ENCODE measurements at regions of chr19 and their contacts with region 1.

Region 1: GRCh38 chr19:18636183-18636968 is 452 bp upstream of the KLHL26 start:
- DNase-seq: peak; percentile 97
- H3K4me3 ChIP-seq: peak overlapping the region; percentile 77 to 94 (median 93)
- H3K27ac ChIP-seq: peak overlapping the region; percentile 22
- H3K4me1 ChIP-seq: peaks cover 5% of the 10 kb centered on the region
- H3K27me3 ChIP-seq: no peaks in the 10 kb centered on the region
- CTCF ChIP-seq: no peak

Region 2: GRCh38 chr19:18577365-18577914 is 58.9 kb before region 1 on chr19:
- CTCF ChIA-PET with region 1: no interaction called
- dilution Hi-C with region 1: no loop called
- in situ Hi-C with region 1: no loop called
- intact Hi-C with region 1: no loop called
- DNase-seq: no peak
- H3K4me3 ChIP-seq: no peak overlapping the region
- H3K27ac ChIP-seq: no peak overlapping the region
- H3K4me1 ChIP-seq: peaks cover 12% of the 10 kb centered on the region
- H3K27me3 ChIP-seq: no peaks in the 10 kb centered on the region
- CTCF ChIP-seq: no peak

Region 3: DNA sequence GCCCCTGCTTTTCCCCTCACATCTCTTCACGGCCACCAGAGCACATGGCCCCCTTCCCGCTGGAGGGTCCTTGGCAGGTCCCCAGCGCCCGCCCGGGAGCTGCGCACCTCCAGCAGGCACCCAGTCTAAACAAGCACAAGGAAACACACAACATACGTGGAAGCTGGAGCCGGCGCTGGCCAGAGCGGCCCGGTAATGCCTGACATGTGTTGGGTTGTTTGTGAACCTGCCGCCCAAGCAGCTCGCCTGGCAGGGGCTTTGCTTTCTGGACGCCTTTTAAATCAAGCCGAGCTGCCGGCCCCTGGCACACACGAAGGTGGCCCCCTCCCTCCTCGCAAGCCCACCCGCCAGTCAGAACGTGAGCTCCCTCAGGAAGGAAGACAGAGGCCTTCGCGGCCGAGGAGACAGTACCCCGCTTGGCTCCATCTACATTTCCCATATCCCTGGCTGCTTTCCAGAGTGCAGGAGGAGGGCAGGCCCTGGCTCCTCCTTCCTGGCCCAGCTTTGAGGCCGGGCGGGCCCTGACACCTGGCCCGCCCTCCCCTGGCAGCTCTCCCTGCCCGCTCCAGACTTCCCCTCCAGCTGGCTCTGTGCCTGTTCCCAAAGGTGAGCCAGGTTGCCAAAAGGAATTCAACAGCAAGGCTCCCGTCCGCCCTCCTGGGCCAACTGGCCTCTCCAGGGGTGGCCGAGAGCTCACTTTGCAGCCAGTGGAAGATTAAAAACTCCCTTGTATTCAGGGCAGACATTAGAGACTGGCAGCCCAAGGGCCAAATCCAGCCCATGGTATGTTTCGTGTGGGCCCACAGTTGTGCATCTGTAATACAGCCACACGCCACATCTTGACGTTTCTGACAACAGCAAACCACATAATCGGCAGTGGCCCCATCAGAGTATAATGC is 126.0 kb after region 1 on chr19:
- CTCF ChIA-PET with region 1: no interaction called
- dilution Hi-C with region 1: loop called (anchors 5 kb)
- in situ Hi-C with region 1: no loop called
- intact Hi-C with region 1: loop called (anchors 5 kb)
- DNase-seq: peak; percentile 94
- H3K4me3 ChIP-seq: peak overlapping the region; percentile 8 to 49 (median 14)
- H3K27ac ChIP-seq: peak overlapping the region; percentile 38
- H3K4me1 ChIP-seq: peaks cover 47% of the 10 kb centered on the region
- H3K27me3 ChIP-seq: no peaks in the 10 kb centered on the region
- CTCF ChIP-seq: no peak

Region 4: DNA sequence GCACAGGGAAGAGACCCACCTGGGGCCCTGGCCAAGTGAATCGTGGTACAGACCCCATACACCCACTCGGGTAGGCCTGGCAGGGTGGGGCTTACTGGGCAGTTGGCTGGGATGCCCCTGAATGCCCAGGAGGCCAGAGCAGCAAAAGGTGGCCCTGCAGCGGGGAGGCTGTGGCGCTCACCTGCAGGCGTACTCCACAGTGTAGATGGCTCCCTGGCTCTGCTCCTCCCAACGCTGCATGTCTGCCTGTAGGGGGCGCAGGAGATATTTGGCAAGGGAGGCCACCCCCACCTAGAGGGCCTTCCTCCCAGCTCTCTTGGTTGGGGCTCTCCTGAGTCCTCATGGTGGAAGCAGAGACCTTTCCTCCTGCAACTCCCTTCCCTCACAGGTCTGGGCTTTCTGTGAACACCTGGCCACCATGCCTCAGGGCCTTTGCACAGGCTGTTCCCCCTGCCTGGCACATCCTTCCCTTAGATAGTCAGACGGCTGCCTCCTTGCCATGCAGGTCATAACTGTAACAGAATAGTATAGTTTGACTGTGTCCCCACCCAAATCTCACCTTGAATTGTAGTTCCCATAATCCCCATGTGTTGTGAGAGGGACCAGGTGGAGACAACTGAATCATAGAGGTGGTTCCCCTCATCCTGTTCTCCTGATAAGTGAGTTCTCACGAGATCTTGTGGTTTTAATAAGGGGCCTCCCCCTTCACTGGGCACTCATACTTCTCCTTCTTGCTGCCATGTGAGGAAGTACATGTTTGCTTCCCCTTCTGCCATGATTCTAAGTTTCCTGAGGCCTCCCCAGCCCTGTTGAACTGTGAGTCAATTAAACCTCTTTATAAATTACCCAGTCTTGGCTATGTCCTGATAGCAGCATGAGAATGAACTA is 549.7 kb after region 1 on chr19:
- CTCF ChIA-PET with region 1: no interaction called
- dilution Hi-C with region 1: no loop called
- in situ Hi-C with region 1: no loop called
- intact Hi-C with region 1: no loop called
- DNase-seq: peak; percentile 25
- H3K4me3 ChIP-seq: no peak overlapping the region
- H3K27ac ChIP-seq: no peak overlapping the region
- H3K4me1 ChIP-seq: peaks cover 8% of the 10 kb centered on the region
- H3K27me3 ChIP-seq: no peaks in the 10 kb centered on the region
- CTCF ChIP-seq: peak; percentile 66 to 84

Measured in mammary epithelial cell (primary cell).